B cell (primary cell): ENCODE measurements at regions of chr2 and their contacts with region 1.

Region 1: GRCh38 chr2:205680067-205680466 is 2.2 kb upstream of the NRP2 start:
- DNase-seq: peak; percentile 71
- ATAC-seq: peak; percentile 22
- H3K4me3 ChIP-seq: no peak overlapping the region
- H3K4me3 Mint-ChIP-seq: peak overlapping the region; percentile 31
- H3K27ac ChIP-seq: no peak overlapping the region
- H3K27ac Mint-ChIP-seq: peak overlapping the region; percentile 48
- H3K4me1 ChIP-seq: peaks cover 32 to 33% of the 10 kb centered on the region in 2 donors
- H3K4me1 Mint-ChIP-seq: peaks cover 37% of the 10 kb centered on the region
- H3K27me3 ChIP-seq: peaks cover 0 to 39% (median 24%) of the 10 kb centered on the region in 4 experiments
- H3K27me3 Mint-ChIP-seq: peaks cover 26% of the 10 kb centered on the region
- CTCF ChIP-seq: peak; percentile 85

Region 2: GRCh38 chr2:204089574-204089973 is 1590.5 kb before region 1 on chr2:
- CTCF ChIA-PET with region 1: no interaction called
- POLR2A ChIA-PET with region 1: no interaction called
- intact Hi-C with region 1: no loop called
- DNase-seq: no peak
- ATAC-seq: no peak
- H3K4me3 ChIP-seq: no peak overlapping the region
- H3K4me3 Mint-ChIP-seq: no peak overlapping the region
- H3K27ac ChIP-seq: no peak overlapping the region
- H3K27ac Mint-ChIP-seq: no peak overlapping the region
- H3K4me1 ChIP-seq: no peaks in the 10 kb centered on the region
- H3K4me1 Mint-ChIP-seq: no peaks in the 10 kb centered on the region
- H3K27me3 ChIP-seq: no peaks in the 10 kb centered on the region
- H3K27me3 Mint-ChIP-seq: peaks cover 4% of the 10 kb centered on the region
- CTCF ChIP-seq: no peak

Region 3: GRCh38 chr2:204260162-204260877 is 1419.7 kb before region 1 on chr2:
- CTCF ChIA-PET with region 1: interaction called, 13 read pairs
- POLR2A ChIA-PET with region 1: no interaction called
- intact Hi-C with region 1: no loop called
- DNase-seq: peak; percentile 42
- ATAC-seq: no peak
- H3K4me3 ChIP-seq: no peak overlapping the region
- H3K4me3 Mint-ChIP-seq: no peak overlapping the region
- H3K27ac ChIP-seq: no peak overlapping the region
- H3K27ac Mint-ChIP-seq: no peak overlapping the region
- H3K4me1 ChIP-seq: no peaks in the 10 kb centered on the region
- H3K4me1 Mint-ChIP-seq: no peaks in the 10 kb centered on the region
- H3K27me3 ChIP-seq: peaks cover 0 to 12% (median 0%) of the 10 kb centered on the region in 4 experiments
- H3K27me3 Mint-ChIP-seq: peaks cover 28% of the 10 kb centered on the region
- CTCF ChIP-seq: peak; percentile 65

Region 4: GRCh38 chr2:205375461-205376448 is 304.3 kb before region 1 on chr2:
- CTCF ChIA-PET with region 1: no interaction called
- POLR2A ChIA-PET with region 1: no interaction called
- intact Hi-C with region 1: no loop called
- DNase-seq: no peak
- ATAC-seq: no peak
- H3K4me3 ChIP-seq: no peak overlapping the region
- H3K4me3 Mint-ChIP-seq: no peak overlapping the region
- H3K27ac ChIP-seq: no peak overlapping the region
- H3K27ac Mint-ChIP-seq: no peak overlapping the region
- H3K4me1 ChIP-seq: no peaks in the 10 kb centered on the region
- H3K4me1 Mint-ChIP-seq: no peaks in the 10 kb centered on the region
- H3K27me3 ChIP-seq: no peaks in the 10 kb centered on the region
- H3K27me3 Mint-ChIP-seq: peaks cover 6% of the 10 kb centered on the region
- CTCF ChIP-seq: no peak

Region 5: DNA sequence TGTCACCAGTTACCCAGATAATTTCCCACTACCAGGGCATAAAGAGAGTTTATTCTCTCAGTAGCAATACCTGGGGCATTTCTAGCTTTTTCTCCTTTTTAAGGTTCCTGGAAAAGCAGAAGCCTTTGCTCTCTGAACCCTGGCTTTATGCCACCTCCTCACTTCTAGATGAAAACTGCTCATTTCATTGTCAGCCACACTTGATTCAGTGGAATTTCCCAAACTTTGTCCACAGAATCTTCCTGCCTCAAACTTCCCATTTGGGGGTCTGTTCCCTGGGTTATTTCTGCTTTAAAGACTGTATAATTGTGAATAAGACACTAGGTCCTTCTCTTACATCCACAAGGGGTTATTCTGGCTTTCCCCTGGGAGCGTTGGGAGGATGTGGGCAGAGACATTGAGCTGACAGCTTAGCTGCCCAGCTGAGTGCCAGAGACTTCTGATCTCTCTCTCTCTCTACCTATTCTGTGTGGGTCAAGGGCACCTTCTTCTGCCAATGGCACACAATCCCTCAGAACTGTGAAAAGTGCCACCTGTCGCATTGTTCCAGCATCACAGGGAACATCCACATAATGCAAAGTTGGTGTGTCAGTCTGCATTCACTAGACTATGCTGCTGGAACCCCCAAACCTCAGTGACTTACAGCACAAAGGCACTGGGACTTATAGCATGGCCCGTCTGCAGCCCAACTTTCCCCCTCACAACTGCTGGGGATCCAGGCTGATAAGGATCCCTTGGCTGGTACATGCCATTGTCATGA is 17.7 kb before region 1 on chr2:
- CTCF ChIA-PET with region 1: interaction called, 11 read pairs
- POLR2A ChIA-PET with region 1: interaction called, 4 read pairs
- intact Hi-C with region 1: no loop called
- DNase-seq: no peak
- ATAC-seq: no peak
- H3K4me3 ChIP-seq: no peak overlapping the region
- H3K4me3 Mint-ChIP-seq: no peak overlapping the region
- H3K27ac ChIP-seq: no peak overlapping the region
- H3K27ac Mint-ChIP-seq: no peak overlapping the region
- H3K4me1 ChIP-seq: peaks cover 22 to 28% of the 10 kb centered on the region in 2 donors
- H3K4me1 Mint-ChIP-seq: peaks cover 38% of the 10 kb centered on the region
- H3K27me3 ChIP-seq: peaks cover 0 to 5% (median 0%) of the 10 kb centered on the region in 4 experiments
- H3K27me3 Mint-ChIP-seq: peaks cover 12% of the 10 kb centered on the region
- CTCF ChIP-seq: no peak

Region 6: GRCh38 chr2:205712508-205712907 is 32.4 kb after region 1 on chr2:
- CTCF ChIA-PET with region 1: interaction called, 54 read pairs
- POLR2A ChIA-PET with region 1: interaction called, 15 read pairs
- intact Hi-C with region 1: loop called (anchors 1 kb)
- DNase-seq: no peak
- ATAC-seq: no peak
- H3K4me3 ChIP-seq: no peak overlapping the region
- H3K4me3 Mint-ChIP-seq: no peak overlapping the region
- H3K27ac ChIP-seq: no peak overlapping the region
- H3K27ac Mint-ChIP-seq: peak overlapping the region; percentile 50
- H3K4me1 ChIP-seq: peaks cover 48 to 54% of the 10 kb centered on the region in 2 donors
- H3K4me1 Mint-ChIP-seq: peaks cover 58% of the 10 kb centered on the region
- H3K27me3 ChIP-seq: no peaks in the 10 kb centered on the region
- H3K27me3 Mint-ChIP-seq: no peaks in the 10 kb centered on the region
- CTCF ChIP-seq: no peak

Region 7: DNA sequence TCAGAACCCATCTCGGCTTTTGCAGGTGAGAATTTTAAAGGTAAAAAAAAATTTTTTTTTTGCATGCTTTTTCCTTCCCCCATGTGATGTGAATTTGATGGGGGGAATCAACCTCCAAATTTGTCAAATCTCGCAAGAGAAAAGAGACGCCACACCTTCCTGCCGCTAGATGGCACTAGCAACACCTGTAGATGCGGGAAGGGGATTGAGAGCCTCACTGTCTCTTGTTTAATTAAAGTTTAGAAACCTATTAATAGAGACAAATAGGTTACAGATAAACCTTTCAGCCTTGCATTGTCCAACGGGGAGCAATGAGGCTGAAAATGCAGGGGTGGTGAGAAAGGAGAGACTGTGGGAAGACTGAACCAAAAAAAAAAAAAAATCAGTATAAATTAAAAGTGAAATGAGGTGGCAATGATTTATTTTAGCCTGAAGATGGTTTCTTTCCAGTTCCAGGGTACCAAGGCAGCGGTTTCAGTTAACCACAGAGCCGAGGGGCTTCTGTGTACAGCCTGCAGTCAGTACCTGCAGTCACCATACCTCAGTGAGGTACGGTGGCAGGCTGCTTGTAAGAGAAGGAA is 86.8 kb after region 1 on chr2:
- CTCF ChIA-PET with region 1: interaction called, 4 read pairs
- POLR2A ChIA-PET with region 1: no interaction called
- intact Hi-C with region 1: loop called (anchors 5 kb)
- DNase-seq: peak; percentile 60
- ATAC-seq: peak; percentile 53
- H3K4me3 ChIP-seq: no peak overlapping the region
- H3K4me3 Mint-ChIP-seq: no peak overlapping the region
- H3K27ac ChIP-seq: no peak overlapping the region
- H3K27ac Mint-ChIP-seq: no peak overlapping the region
- H3K4me1 ChIP-seq: peaks cover 7 to 11% of the 10 kb centered on the region in 2 donors
- H3K4me1 Mint-ChIP-seq: peaks cover 2% of the 10 kb centered on the region
- H3K27me3 ChIP-seq: peaks cover 0 to 11% (median 4%) of the 10 kb centered on the region in 4 experiments
- H3K27me3 Mint-ChIP-seq: peaks cover 21% of the 10 kb centered on the region
- CTCF ChIP-seq: peak; percentile 99